Posterior cingulate gyrus (tissue), 11 donors: ENCODE measurements at regions of chr16 and their contacts with region 1.

Region 1: DNA sequence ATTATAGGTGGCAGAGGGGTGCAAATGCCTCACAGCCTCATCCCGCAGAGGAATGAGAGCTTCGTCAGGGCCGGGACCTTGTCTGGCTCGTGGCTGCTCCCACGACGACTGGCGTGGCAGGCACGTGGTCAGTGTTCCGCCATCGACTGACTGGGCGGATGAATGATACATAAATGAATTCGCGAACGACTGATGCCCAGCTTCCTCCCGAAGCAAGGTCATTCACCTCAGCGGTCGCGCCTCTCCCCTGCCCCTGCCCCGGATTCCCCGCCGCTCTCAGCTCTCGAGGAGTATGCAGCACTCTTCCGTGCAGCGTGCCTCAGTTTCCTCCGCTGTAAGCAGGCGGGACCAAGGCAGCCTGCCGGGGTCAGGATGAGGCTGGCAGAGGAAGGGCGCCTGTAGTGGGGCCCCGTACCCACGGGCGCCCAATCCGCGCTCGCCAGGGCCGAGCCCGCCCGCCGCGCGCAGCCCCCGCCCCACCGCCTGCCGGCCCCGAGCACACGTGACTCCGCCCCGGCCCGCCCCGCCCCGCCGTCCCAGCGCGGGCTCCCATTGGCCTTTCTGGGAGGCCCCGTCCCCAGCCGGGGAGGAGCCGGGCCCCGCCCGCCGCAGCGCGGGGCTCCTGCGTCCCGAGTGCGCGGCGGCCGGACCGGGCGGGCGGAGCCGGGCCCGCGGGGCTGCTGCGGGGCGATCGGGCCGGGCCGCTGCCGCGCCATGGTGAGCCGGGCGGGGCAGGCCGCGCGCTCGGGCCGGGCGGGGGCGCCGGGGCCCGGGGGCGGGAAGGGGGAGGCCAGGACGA is at the start of gene SNN:
- DNase-seq: peak; percentile 75 to 98 (median 88)

Region 2: GRCh38 chr16:11649276-11649675 is 18.7 kb before region 1 on chr16:
- intact Hi-C with region 1: no loop called
- DNase-seq: no peak

Region 3: DNA sequence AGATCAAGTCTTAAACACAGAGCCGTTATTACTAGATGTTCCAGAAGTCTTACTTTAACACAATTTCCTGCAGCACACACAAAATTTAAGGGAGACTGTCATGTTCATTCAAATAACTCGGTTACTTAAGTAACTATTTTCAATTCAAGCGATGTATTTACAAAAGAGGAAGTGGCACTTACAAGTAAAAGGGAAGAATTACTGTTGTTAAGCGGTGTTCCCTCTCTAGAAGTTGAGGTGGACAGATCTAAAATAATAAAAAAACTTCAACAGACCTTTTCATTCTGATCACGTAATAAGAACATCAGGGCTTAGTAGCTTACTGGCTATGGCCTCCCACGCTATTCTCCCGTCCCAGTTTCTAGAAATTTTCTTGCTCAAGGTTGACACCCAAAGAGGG is 100.8 kb after region 1 on chr16:
- intact Hi-C with region 1: no loop called
- DNase-seq: no peak

Region 4: DNA sequence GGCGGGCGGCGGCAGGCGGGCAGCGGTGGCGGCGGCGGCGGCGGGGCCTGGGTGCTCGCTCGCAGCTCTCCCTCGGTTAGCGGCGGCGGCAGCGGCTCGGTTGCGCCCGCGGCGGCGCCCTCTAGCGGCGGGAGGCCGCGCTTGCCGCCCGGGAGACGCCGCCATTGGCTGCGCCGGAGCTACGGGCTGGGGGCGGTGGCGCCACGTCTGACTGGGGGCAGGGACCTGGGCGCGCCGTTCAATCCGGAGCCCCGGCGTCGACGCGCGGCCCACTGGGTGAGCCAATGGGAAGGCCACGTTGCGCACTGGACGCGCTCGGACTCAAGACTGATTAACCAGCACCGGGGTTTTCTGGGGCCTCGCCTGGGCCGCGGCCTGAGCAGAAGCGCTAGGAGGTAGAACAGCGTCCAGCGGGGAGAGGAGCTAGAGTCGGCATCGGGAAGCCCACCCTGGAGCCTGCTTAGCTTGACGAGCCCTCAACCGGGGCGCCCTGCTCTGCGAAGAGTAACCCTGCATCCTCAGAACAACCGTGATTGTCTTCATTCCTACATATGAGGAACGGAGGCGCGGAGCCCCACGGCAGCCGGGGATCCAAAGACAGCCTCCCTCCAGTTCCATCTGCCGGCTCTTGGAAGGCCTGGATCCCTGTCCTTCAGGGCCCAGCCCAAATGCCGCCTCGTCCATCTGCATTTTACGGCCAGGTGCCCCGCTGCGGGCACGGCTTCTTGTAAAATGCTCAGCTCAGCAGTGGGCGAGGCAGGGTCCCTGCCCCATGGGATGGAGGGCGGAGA is 129.3 kb after region 1 on chr16 and contains the start of gene ZC3H7A:
- intact Hi-C with region 1: loop called (anchors 10 kb)
- DNase-seq: peak; percentile 90 to 99 (median 96)